Common myeloid progenitor, CD34-positive (primary cell): ENCODE measurements at regions of chr18 and their contacts with region 1.

Region 1: DNA sequence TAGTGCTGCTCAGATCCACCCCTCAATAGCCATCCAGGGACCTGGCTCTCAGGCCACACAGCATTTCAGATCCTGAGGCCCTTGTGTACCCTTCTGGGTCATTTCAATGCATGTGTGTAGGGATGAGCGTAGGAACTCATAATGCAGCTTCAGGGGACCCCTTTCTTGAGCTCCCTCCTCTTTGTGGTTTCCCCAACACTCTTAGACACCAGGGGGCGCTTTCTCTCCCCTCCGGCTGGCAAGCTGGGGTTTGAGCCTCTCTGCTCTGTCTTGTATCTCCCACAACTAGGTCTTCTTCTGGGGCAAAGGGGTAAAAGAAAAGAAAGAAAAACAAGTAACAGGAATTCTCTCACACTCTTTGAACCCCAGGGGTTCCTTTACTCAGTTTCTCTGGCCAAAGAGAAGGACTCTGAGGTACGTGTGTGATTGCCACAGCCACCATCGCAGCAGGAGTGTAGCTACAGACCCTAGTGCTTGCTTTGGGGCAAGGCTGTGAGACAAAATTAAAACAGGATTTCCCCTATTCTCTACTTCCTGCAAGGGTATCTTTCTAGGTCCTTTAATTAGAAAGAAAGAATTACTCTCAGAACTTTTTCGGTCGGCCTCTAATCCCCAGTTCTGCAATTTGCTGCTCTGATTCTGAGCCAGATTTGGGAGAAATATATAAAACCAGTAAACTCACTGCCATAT is 38.0 kb downstream of the CABYR start:
- DNase-seq: peak; percentile 54 to 71 (median 67)
- H3K4me3 ChIP-seq: no peak overlapping the region
- H3K27ac ChIP-seq: no peak overlapping the region
- H3K4me1 ChIP-seq: peaks cover 0 to 2% (median 0%) of the 10 kb centered on the region in 4 experiments
- H3K27me3 ChIP-seq: no peaks in the 10 kb centered on the region

Region 2: DNA sequence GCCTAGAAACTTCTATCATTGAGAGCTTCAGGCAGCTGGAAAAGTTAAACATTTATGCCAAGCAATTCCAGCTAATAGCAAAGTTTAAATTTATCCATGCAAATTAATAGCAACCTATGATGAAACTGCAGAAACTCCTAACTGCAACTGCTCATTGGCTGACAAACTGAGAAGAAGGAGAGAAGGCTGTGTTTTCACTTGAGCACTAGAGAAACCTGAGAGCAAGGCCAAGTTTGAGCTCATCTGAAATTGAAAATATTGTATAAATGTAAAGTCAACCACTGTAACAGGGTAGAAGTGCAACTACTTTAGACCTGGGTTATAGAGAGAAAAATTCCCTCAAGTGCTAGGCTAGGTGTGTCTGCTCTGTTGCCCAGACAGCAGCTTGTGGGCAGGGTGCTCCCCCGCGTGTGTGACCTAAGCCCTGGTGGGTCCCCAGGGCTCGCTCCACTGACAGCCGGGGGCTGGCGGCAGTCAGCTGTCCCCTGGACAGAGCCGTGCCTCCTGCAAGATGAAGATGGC is 12.2 kb after region 1 on chr18:
- CTCF ChIA-PET with region 1: interaction called, 19 read pairs
- POLR2A ChIA-PET with region 1: no interaction called
- DNase-seq: no peak
- H3K4me3 ChIP-seq: no peak overlapping the region
- H3K27ac ChIP-seq: no peak overlapping the region
- H3K4me1 ChIP-seq: peaks cover 0 to 5% (median 2%) of the 10 kb centered on the region in 4 experiments
- H3K27me3 ChIP-seq: no peaks in the 10 kb centered on the region